Body of pancreas (tissue), 4 donors: ENCODE measurements at regions of chr3 and their contacts with region 1.

Region 1: DNA sequence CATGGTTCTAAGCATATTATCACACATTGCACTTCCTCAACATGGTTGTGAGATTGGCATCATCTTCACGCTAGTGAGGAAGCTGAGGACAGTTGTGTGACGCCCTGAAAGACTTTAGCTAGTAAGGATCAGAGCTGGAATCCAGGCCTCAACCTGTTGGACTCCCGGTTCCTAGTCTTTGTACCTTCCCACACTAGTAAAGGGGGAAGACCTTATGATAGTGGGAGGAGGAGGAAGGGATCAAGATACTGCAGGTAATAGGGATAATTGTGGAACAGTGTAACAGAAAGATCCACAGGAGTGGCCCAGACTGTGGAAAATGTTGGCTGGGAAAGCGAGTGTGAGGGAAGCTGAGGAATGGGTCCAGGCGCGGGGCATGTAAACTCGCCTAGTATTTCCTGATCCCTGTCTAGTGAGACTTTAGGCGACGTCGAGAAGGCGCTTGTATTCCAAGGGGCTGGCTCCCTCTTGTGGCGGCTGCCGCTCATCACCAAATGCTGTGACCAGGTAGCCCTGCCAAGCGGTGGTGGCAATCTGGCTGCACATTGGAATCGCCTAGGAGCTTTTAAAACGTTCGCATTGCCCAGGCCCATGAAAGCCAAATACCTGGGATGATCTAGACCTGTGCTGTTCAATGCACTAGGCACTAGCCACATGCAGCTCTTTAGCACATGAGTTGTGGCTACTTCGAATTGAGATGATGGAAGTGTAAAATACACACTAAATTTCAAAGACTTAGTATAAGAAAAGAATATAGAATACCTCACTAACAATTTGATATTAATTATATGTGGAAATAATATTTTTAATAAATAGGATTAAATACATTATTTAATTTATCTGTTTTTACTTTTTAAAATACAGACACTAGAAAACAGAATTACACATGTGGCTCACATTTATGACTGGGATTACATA is 38.8 kb upstream of the CLDN18 start:
- DNase-seq: peak; percentile 80 to 89 (median 83)
- ATAC-seq: peak; percentile 94
- H3K4me3 ChIP-seq: no peak overlapping the region
- H3K27ac ChIP-seq: no peak overlapping the region
- H3K4me1 ChIP-seq: no peaks in the 10 kb centered on the region
- H3K27me3 ChIP-seq: no peaks in the 10 kb centered on the region
- CTCF ChIP-seq: peak; percentile 70 to 87 (median 78)
- POLR2A ChIP-seq: no peak

Region 2: GRCh38 chr3:137105277-137105977 is 865.7 kb before region 1 on chr3:
- intact Hi-C with region 1: loop called (anchors 10 kb)
- DNase-seq: peak in 3 of 4 donors; percentile 15 to 31 (median 29)
- ATAC-seq: peak; percentile 69
- H3K4me3 ChIP-seq: no peak overlapping the region
- H3K27ac ChIP-seq: no peak overlapping the region
- H3K4me1 ChIP-seq: peaks cover 4% of the 10 kb centered on the region
- H3K27me3 ChIP-seq: no peaks in the 10 kb centered on the region
- CTCF ChIP-seq: peak; percentile 48 to 70 (median 64)
- POLR2A ChIP-seq: no peak

Region 3: GRCh38 chr3:137409584-137409983 is 561.6 kb before region 1 on chr3:
- intact Hi-C with region 1: no loop called
- DNase-seq: no peak
- ATAC-seq: no peak
- H3K4me3 ChIP-seq: no peak overlapping the region
- H3K27ac ChIP-seq: no peak overlapping the region
- H3K4me1 ChIP-seq: no peaks in the 10 kb centered on the region
- H3K27me3 ChIP-seq: no peaks in the 10 kb centered on the region
- CTCF ChIP-seq: no peak
- POLR2A ChIP-seq: no peak

Region 4: GRCh38 chr3:138157743-138158142 is 186.6 kb after region 1 on chr3:
- intact Hi-C with region 1: no loop called
- DNase-seq: no peak
- ATAC-seq: no peak
- H3K4me3 ChIP-seq: no peak overlapping the region
- H3K27ac ChIP-seq: no peak overlapping the region
- H3K4me1 ChIP-seq: no peaks in the 10 kb centered on the region
- H3K27me3 ChIP-seq: no peaks in the 10 kb centered on the region
- CTCF ChIP-seq: no peak
- POLR2A ChIP-seq: no peak